ENCODE measurements at regions of chr11 and their contacts with region 1.

Region 1: DNA sequence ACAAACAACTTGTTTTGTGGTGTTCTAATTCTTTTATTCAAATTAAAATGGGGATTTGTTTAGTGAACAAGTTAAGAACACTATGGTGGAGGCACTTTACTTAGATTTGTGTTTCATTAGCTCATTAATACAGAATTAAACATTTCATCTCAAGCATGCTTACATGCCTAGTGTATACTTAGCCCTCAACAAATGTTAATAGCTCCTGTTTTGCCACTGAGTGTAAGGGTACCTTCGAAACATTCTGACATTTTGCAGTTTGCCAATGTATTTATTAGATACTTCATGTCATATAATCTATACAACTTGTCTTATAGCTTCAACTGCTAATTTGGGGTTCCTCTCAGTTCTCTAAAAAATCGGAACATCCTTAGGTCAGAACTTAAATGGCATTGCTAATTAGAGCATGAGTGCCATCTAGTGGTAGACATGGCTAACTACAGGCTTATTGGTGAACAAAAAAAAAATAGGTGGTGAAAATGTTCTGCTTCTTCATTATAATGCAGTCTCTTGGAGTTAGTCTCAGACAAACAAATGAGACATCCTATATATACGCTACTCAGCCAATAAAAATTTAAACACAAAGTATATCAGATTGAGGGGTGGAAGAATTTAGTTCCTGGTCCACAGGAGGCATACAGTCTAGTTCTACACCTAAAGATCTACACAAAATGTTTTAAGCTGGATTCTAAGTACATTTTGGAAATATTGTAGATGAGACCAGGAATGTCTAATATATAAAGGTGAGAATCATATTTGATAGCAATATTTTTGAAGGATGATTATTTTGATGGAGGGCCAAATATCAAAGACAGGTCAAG is 4.9 kb upstream of the CNTN5 start:
- DNase-seq: no peak
- ATAC-seq: peak; percentile 60
- H3K4me3 Mint-ChIP-seq: no peak overlapping the region
- H3K27ac Mint-ChIP-seq: no peak overlapping the region
- H3K4me1 Mint-ChIP-seq: peaks cover 5% of the 10 kb centered on the region
- H3K27me3 Mint-ChIP-seq: peaks cover 10% of the 10 kb centered on the region
- CTCF ChIP-seq: peak; percentile 97

Region 2: GRCh38 chr11:100930185-100930778 is 1914.4 kb after region 1 on chr11:
- CTCF ChIA-PET with region 1: no interaction called
- POLR2A ChIA-PET with region 1: no interaction called
- intact Hi-C with region 1: loop called (anchors 5 kb)
- DNase-seq: no peak
- ATAC-seq: no peak
- H3K4me3 Mint-ChIP-seq: no peak overlapping the region
- H3K27ac Mint-ChIP-seq: no peak overlapping the region
- H3K4me1 Mint-ChIP-seq: peaks cover 10% of the 10 kb centered on the region
- H3K27me3 Mint-ChIP-seq: no peaks in the 10 kb centered on the region
- CTCF ChIP-seq: no peak